Activated CD8-positive, alpha-beta T cell treated with anti-CD3 and anti-CD28 coated beads for 36 hours (primary cell): ENCODE measurements at regions of chr11 and their contacts with region 1.

Region 1: DNA sequence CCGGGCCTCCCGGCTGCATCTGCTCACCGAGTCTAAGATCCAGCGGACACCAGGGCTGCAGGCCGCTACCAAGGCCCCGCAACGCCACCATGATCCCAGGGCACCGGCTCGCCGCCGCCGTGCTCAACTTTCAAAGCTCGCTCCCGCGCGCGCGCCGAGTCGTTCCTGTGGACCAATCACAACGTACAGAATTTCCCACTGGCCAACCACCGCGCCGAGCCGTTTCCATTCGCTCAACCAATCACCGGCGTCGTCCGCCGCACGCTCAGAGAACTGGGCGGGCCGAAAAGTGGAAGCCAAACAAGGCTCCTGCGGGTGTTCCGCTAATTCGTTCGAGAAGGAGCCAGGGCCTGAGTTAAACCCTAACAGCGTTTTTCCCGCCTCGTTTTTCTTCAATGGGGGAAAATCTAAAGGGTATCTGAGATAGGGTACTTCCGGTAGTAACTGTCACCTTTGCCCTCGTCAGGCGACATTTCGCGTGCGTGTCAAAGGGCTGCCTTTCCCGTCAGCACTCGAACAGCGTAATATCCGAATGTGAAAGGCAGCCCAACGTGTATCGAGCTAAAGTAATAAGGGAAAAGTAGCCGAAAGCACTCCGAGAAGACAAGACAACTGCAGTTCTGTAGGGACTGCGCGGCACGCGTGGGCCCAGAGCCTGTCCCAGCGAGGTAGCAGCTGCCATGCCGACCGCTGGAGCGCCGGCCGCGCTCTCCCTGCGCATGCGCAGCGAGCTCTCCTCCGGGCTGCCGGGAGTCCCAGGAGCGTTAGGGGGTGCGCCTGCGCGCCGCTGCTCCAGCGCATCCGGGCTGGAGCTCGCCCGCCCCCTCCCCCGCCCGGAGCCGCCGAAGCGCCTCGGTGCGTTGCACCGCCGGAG is at the starts of genes NCAPD3 and VPS26B:
- DNase-seq: peak; percentile 99
- ATAC-seq: peak; percentile 78
- H3K4me3 Mint-ChIP-seq: peak within 1 kb of the TSS; percentile 95
- H3K27ac Mint-ChIP-seq: peak within 1 kb of the TSS; percentile 96
- H3K4me1 Mint-ChIP-seq: peaks cover 58% of the 10 kb centered on the region
- H3K27me3 Mint-ChIP-seq: no peaks in the 10 kb centered on the region
- CTCF ChIP-seq: no peak
- total RNA-seq, gene NCAPD3: 98.4 to 102 TPM
- total RNA-seq, gene VPS26B: 35.6 TPM

Region 2: DNA sequence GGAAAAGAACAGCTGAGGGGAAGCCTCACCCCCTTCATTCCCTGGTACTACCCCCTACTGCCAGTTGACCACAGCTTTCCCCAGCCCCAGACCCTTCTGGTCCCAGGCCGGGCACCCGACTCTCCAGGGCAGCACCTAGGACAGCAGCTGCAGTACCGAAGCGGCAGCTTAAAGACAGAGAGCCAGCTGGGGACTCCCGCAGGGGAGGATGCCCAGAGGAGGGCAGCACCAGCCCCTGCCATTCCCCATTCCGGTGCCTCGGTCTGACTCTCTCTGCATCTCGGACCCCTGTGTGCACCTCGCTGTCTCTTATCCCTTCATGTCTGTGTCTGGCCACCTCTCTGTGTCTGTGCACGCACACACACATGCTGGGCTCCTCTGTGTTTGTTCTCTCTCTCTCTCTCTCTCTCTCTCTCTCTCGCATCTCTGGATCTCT is 276.7 kb before region 1 on chr11:
- CTCF ChIA-PET with region 1: interaction called, 3 read pairs
- POLR2A ChIA-PET with region 1: interaction called, 3 read pairs
- intact Hi-C with region 1: loop called (anchors 10 kb)
- DNase-seq: peak; percentile 83
- ATAC-seq: peak; percentile 43
- H3K4me3 Mint-ChIP-seq: peak overlapping the region; percentile 81
- H3K27ac Mint-ChIP-seq: peak overlapping the region; percentile 75
- H3K4me1 Mint-ChIP-seq: peaks cover 65% of the 10 kb centered on the region
- H3K27me3 Mint-ChIP-seq: no peaks in the 10 kb centered on the region
- CTCF ChIP-seq: peak; percentile 39

Region 3: DNA sequence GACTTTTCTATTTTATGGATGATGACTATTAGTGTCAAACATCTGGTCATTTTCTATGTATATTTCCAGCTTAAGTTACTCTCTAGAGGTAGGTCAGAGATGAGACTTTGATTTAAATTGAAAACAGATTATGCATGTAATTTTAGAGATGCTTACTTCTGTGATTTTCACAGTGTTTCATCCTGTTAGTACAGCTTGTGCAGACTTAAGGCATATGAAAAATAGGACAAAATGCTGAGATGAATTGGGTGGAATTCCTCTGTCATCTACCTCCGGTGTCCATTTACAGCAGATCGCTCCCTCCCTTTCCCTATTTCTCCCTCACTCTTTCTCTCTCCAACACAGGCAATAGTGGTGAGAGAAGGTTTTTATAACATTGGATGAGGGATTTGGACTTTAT is 141.1 kb before region 1 on chr11:
- CTCF ChIA-PET with region 1: no interaction called
- POLR2A ChIA-PET with region 1: no interaction called
- intact Hi-C with region 1: no loop called
- DNase-seq: no peak
- ATAC-seq: no peak
- H3K4me3 Mint-ChIP-seq: no peak overlapping the region
- H3K27ac Mint-ChIP-seq: no peak overlapping the region
- H3K4me1 Mint-ChIP-seq: no peaks in the 10 kb centered on the region
- H3K27me3 Mint-ChIP-seq: no peaks in the 10 kb centered on the region
- CTCF ChIP-seq: no peak

Region 4: DNA sequence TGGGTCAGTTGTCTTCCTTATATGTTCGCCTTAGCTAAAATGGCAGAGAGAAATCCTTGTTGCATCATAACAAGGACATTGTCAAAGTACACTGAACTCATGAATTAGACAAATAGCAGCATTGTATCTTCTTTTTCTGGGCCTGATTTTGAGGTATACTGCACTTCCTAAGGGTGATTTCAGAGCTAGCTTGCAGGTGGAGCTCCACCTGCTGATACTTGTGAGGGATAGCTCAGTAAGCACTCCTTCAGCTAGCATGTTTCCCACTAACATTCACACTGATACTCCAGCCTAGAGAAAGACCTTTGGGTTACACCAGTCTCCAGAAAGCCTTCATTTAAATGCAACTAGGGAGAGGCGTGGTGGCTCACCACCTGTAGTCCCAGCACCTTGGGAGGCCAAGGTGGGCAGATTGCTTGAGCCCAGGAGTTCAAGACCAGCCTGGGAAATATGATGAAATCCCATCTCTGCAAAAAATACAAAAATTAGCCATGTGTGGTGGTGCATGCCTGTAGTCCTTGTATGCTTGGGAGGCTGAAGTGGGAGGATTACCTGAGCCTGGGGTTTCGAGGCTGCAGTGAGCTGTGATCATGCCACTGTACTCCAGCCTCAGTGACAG is 125.4 kb before region 1 on chr11:
- CTCF ChIA-PET with region 1: no interaction called
- POLR2A ChIA-PET with region 1: no interaction called
- intact Hi-C with region 1: no loop called
- DNase-seq: no peak
- ATAC-seq: peak; percentile 67
- H3K4me3 Mint-ChIP-seq: no peak overlapping the region
- H3K27ac Mint-ChIP-seq: no peak overlapping the region
- H3K4me1 Mint-ChIP-seq: peaks cover 2% of the 10 kb centered on the region
- H3K27me3 Mint-ChIP-seq: no peaks in the 10 kb centered on the region
- CTCF ChIP-seq: peak; percentile 19

Region 5: GRCh38 chr11:134235399-134235798 is 11.3 kb after region 1 on chr11:
- CTCF ChIA-PET with region 1: interaction called, 11 read pairs
- POLR2A ChIA-PET with region 1: interaction called, 13 read pairs
- intact Hi-C with region 1: no loop called
- DNase-seq: no peak
- ATAC-seq: no peak
- H3K4me3 Mint-ChIP-seq: no peak overlapping the region
- H3K27ac Mint-ChIP-seq: no peak overlapping the region
- H3K4me1 Mint-ChIP-seq: peaks cover 21% of the 10 kb centered on the region
- H3K27me3 Mint-ChIP-seq: no peaks in the 10 kb centered on the region
- CTCF ChIP-seq: no peak

Region 6: DNA sequence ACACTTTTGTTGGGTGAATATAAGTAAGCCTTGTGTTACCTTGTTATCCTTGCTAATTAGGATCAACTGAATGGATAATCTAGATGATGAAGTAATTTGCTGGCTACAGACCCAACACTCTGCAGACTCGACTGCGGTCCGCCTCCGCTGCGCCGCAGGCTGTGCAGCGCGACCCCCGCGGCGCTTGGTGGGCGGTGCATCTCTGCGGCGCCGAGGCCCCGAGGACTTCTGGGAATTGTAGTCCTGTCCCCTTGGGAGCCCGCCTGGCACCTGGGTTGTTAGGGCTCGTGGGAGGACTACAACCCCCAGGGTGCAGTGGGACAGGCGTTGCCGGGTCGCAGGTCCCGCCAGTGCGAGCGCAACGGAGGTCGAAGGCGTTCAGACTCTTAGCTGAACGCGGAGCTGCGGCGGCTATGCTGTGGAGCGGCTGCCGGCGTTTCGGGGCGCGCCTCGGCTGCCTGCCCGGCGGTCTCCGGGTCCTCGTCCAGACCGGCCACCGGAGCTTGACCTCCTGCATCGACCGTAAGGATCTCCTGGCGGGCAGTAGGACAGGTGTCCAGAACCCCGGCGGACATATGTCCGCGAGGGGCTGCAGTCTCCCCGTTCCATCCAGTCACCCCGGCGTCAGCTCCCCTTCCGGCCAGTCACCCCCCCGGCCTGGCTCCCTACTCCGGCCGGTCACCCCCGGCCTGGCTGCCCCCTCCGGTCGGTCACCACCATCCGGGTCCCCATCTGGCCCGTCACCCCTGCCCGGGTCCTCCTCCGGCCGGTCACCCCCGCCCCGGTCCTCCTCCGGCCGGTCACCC is 29.3 kb after region 1 on chr11 and contains the starts of genes ACAD8 and THYN1:
- CTCF ChIA-PET with region 1: interaction called, 8 read pairs
- POLR2A ChIA-PET with region 1: interaction called, 18 read pairs
- intact Hi-C with region 1: no loop called
- DNase-seq: peak; percentile 98
- ATAC-seq: peak; percentile 99
- H3K4me3 Mint-ChIP-seq: peak within 1 kb of the TSS; percentile 99
- H3K27ac Mint-ChIP-seq: peak within 1 kb of the TSS; percentile 94
- H3K4me1 Mint-ChIP-seq: peaks cover 34% of the 10 kb centered on the region
- H3K27me3 Mint-ChIP-seq: no peaks in the 10 kb centered on the region
- CTCF ChIP-seq: no peak
- total RNA-seq, gene ACAD8: 13.1 to 13.8 TPM
- total RNA-seq, gene THYN1: 70.1 to 75.3 TPM

Region 7: GRCh38 chr11:134275534-134276395 is 51.7 kb after region 1 on chr11 and contains the start of gene GLB1L3:
- CTCF ChIA-PET with region 1: interaction called, 3 read pairs
- POLR2A ChIA-PET with region 1: interaction called, 28 read pairs
- intact Hi-C with region 1: no loop called
- DNase-seq: peak; percentile 87
- ATAC-seq: peak; percentile 89
- H3K4me3 Mint-ChIP-seq: peak within 1 kb of the TSS; percentile 88
- H3K27ac Mint-ChIP-seq: peak within 1 kb of the TSS; percentile 96
- H3K4me1 Mint-ChIP-seq: peaks cover 35% of the 10 kb centered on the region
- H3K27me3 Mint-ChIP-seq: peaks cover 4% of the 10 kb centered on the region
- CTCF ChIP-seq: peak; percentile 52
- total RNA-seq, gene GLB1L3: 11.2 to 11.9 TPM